CD4-positive, alpha-beta memory T cell (primary cell): ENCODE measurements at regions of chr3 and their contacts with region 1.

Region 1: GRCh38 chr3:160413613-160414248 is 14.3 kb downstream of the SMC4 start:
- DNase-seq: peak; percentile 68 to 74 (median 70)
- H3K4me3 ChIP-seq: no peak overlapping the region
- H3K4me3 Mint-ChIP-seq: no peak overlapping the region
- H3K27ac ChIP-seq: no peak overlapping the region
- H3K27ac Mint-ChIP-seq: peak overlapping the region in 3 of 7 donors; percentile 17 to 64 (median 33)
- H3K4me1 ChIP-seq: peaks cover 13% of the 10 kb centered on the region
- H3K4me1 Mint-ChIP-seq: peaks cover 10 to 21% (median 16%) of the 10 kb centered on the region in 4 donors
- H3K27me3 ChIP-seq: no peaks in the 10 kb centered on the region
- H3K27me3 Mint-ChIP-seq: no peaks in the 10 kb centered on the region

Region 2: GRCh38 chr3:158845765-158846350 is 1567.9 kb before region 1 on chr3:
- CTCF ChIA-PET with region 1: no interaction called
- POLR2A ChIA-PET with region 1: no interaction called
- intact Hi-C with region 1: loop called (anchors 2 kb)
- DNase-seq: peak; percentile 45 to 56 (median 46)
- H3K4me3 ChIP-seq: no peak overlapping the region
- H3K4me3 Mint-ChIP-seq: peak overlapping the region in 1 of 8 donors; percentile 39
- H3K27ac ChIP-seq: no peak overlapping the region
- H3K27ac Mint-ChIP-seq: no peak overlapping the region
- H3K4me1 ChIP-seq: peaks cover 4% of the 10 kb centered on the region
- H3K4me1 Mint-ChIP-seq: peaks cover 0 to 5% (median 3%) of the 10 kb centered on the region in 4 donors
- H3K27me3 ChIP-seq: no peaks in the 10 kb centered on the region
- H3K27me3 Mint-ChIP-seq: no peaks in the 10 kb centered on the region

Region 3: DNA sequence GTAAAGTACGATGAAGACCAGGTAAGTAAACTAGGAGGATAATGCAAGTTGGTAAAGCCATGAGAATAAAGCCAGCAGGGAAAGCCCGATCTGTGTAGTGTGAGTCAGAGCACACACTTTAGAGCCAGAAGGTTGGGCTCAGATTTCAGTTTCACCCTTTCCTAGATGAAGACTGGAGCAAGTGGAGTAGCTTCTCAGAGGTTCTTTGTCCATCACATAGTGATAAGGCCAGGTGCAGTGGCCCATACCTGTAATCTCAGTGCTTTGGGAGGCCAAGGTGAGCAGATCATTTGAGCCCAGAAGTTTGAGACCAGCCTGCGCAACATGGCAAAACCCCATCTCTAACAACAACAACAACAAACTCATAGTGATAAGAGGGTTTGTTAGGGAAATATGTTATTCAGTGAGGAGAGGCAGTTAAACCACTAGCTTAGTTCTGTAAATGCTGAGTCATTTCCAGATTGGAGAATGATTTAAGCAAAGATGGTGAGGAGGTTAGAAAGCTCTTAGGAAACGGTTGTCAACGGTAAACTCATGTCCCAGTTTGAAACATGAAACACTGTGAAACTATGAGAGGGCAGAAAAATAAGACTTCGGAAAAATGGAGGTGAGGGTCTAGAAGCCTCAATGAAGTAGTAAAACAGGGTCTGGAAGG is 386.1 kb before region 1 on chr3:
- CTCF ChIA-PET with region 1: interaction called, 29 read pairs
- POLR2A ChIA-PET with region 1: no interaction called
- intact Hi-C with region 1: loop called (anchors 1 kb)
- DNase-seq: no peak
- H3K4me3 ChIP-seq: no peak overlapping the region
- H3K4me3 Mint-ChIP-seq: peak overlapping the region in 1 of 8 donors; percentile 46
- H3K27ac ChIP-seq: no peak overlapping the region
- H3K27ac Mint-ChIP-seq: peak overlapping the region in 1 of 7 donors; percentile 28
- H3K4me1 ChIP-seq: no peaks in the 10 kb centered on the region
- H3K4me1 Mint-ChIP-seq: peaks cover 9 to 14% (median 12%) of the 10 kb centered on the region in 4 donors
- H3K27me3 ChIP-seq: no peaks in the 10 kb centered on the region
- H3K27me3 Mint-ChIP-seq: no peaks in the 10 kb centered on the region

Region 4: DNA sequence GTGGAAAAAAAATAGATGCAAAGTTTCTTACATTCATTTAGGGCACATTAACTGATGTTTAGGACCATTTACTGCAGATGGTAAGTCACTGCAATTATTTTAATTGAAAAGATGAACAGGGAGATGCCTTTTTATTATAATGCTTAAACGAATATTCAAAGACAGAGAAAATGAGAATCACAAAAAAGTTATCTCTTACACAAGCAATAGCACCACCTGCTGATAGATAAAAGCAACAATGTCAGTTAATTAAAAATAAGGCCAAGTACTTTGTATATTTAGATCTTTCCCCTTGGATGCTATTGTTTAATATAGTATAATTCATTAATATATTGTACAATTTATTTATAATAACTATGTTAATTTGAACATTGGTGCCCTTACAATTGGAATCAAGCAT is 70.6 kb before region 1 on chr3:
- CTCF ChIA-PET with region 1: interaction called, 3 read pairs
- POLR2A ChIA-PET with region 1: no interaction called
- intact Hi-C with region 1: loop called (anchors 5 kb)
- DNase-seq: peak in 1 of 5 donors; percentile 1
- H3K4me3 ChIP-seq: no peak overlapping the region
- H3K4me3 Mint-ChIP-seq: no peak overlapping the region
- H3K27ac ChIP-seq: no peak overlapping the region
- H3K27ac Mint-ChIP-seq: no peak overlapping the region
- H3K4me1 ChIP-seq: no peaks in the 10 kb centered on the region
- H3K4me1 Mint-ChIP-seq: no peaks in the 10 kb centered on the region
- H3K27me3 ChIP-seq: no peaks in the 10 kb centered on the region
- H3K27me3 Mint-ChIP-seq: no peaks in the 10 kb centered on the region

Region 5: GRCh38 chr3:160427832-160428424 is 14.2 kb after region 1 on chr3:
- CTCF ChIA-PET with region 1: interaction called, 10 read pairs
- POLR2A ChIA-PET with region 1: interaction called, 3 read pairs
- intact Hi-C with region 1: no loop called
- DNase-seq: no peak
- H3K4me3 ChIP-seq: no peak overlapping the region
- H3K4me3 Mint-ChIP-seq: no peak overlapping the region
- H3K27ac ChIP-seq: no peak overlapping the region
- H3K27ac Mint-ChIP-seq: peak overlapping the region in 1 of 7 donors; percentile 24
- H3K4me1 ChIP-seq: no peaks in the 10 kb centered on the region
- H3K4me1 Mint-ChIP-seq: peaks cover 0 to 5% (median 2%) of the 10 kb centered on the region in 4 donors
- H3K27me3 ChIP-seq: no peaks in the 10 kb centered on the region
- H3K27me3 Mint-ChIP-seq: no peaks in the 10 kb centered on the region

Region 6: GRCh38 chr3:160449636-160450598 is 36.2 kb after region 1 on chr3 and contains the start of gene TRIM59:
- CTCF ChIA-PET with region 1: interaction called, 23 read pairs
- POLR2A ChIA-PET with region 1: interaction called, 18 read pairs
- intact Hi-C with region 1: no loop called
- DNase-seq: peak; percentile 93 to 98 (median 97)
- H3K4me3 ChIP-seq: peak within 1 kb of the TSS; percentile 82 to 91
- H3K4me3 Mint-ChIP-seq: peak within 1 kb of the TSS; percentile 93 to 100 (median 98)
- H3K27ac ChIP-seq: peak within 1 kb of the TSS; percentile 81
- H3K27ac Mint-ChIP-seq: peak within 1 kb of the TSS; percentile 92 to 99 (median 97)
- H3K4me1 ChIP-seq: peaks cover 35% of the 10 kb centered on the region
- H3K4me1 Mint-ChIP-seq: peaks cover 18 to 48% (median 33%) of the 10 kb centered on the region in 4 donors
- H3K27me3 ChIP-seq: no peaks in the 10 kb centered on the region
- H3K27me3 Mint-ChIP-seq: no peaks in the 10 kb centered on the region
- total RNA-seq, gene TRIM59: 26.3 to 28.3 TPM

Region 7: GRCh38 chr3:160473978-160474377 is 60.2 kb after region 1 on chr3:
- CTCF ChIA-PET with region 1: no interaction called
- POLR2A ChIA-PET with region 1: no interaction called
- intact Hi-C with region 1: no loop called
- DNase-seq: no peak
- H3K4me3 ChIP-seq: no peak overlapping the region
- H3K4me3 Mint-ChIP-seq: no peak overlapping the region
- H3K27ac ChIP-seq: no peak overlapping the region
- H3K27ac Mint-ChIP-seq: no peak overlapping the region
- H3K4me1 ChIP-seq: no peaks in the 10 kb centered on the region
- H3K4me1 Mint-ChIP-seq: no peaks in the 10 kb centered on the region
- H3K27me3 ChIP-seq: no peaks in the 10 kb centered on the region
- H3K27me3 Mint-ChIP-seq: peaks cover 9 to 16% of the 10 kb centered on the region in 2 donors

Region 8: GRCh38 chr3:160841455-160841854 is 427.7 kb after region 1 on chr3:
- CTCF ChIA-PET with region 1: no interaction called
- POLR2A ChIA-PET with region 1: no interaction called
- intact Hi-C with region 1: no loop called
- DNase-seq: no peak
- H3K4me3 ChIP-seq: no peak overlapping the region
- H3K4me3 Mint-ChIP-seq: no peak overlapping the region
- H3K27ac ChIP-seq: no peak overlapping the region
- H3K27ac Mint-ChIP-seq: no peak overlapping the region
- H3K4me1 ChIP-seq: no peaks in the 10 kb centered on the region
- H3K4me1 Mint-ChIP-seq: peaks cover 4 to 9% (median 6%) of the 10 kb centered on the region in 4 donors
- H3K27me3 ChIP-seq: no peaks in the 10 kb centered on the region
- H3K27me3 Mint-ChIP-seq: peaks cover 0 to 1% of the 10 kb centered on the region in 2 donors